Cardiac septum (tissue), 1 donor: ENCODE measurements at regions of chr1 and their contacts with region 1.

Region 1: DNA sequence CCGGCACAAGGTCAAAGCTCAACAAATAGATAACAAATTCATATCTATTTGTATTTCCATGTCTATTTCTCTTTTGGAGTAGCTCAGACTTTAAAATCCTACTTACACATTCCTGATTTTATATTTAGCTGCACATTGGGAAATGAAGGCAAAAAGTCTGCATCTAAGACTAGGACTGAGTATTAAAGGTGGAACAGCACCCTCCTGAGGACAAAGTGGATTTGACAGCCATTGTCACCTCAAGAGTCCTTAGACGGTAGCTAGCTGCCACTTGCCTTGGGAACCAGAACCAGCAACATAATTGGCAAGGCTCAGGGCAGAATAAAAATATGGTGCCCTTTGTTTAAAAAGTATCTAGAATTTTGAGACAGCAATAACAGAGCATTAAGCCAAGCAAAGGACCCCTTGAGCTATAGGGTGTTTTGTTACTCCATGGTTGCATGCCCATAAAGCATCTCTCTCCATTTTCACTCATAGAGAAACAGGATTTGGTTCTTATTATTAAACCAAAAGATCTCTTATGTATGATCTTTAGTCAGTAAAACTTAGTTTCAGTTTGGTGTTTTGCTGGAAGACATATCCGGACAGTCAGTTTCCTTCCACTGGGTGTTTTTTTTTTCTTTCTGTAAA is 30.0 kb upstream of the SGIP1 start:
- DNase-seq: no peak

Region 2: DNA sequence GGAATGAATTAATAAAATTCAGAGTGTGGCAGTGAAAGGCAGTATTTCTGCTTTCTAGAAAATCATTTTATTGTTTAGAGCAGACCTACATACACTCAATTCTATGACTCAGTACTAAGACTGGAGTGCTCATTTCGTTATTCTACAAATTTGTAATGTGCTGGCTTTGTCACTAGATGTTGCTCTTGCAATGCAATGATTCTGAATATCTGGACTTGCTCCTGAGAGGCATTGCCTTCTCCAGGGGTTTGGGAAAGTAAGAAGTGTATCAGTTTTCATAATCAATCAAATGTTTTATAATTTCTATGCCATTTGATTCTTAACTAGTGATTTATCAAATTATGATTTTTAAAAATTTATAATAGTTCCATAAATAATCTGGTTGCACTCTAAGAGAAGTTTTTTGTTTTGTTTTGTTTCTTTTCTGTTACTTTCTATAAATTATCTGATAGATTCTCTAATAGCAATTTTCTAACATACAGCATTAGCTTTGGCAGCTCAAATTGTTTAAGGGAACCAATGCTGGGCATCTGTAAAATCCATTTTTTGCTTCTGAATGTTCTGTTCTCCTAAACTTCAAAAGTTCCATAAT is 250.5 kb before region 1 on chr1:
- intact Hi-C with region 1: loop called (anchors 5 kb)
- DNase-seq: no peak

Region 3: DNA sequence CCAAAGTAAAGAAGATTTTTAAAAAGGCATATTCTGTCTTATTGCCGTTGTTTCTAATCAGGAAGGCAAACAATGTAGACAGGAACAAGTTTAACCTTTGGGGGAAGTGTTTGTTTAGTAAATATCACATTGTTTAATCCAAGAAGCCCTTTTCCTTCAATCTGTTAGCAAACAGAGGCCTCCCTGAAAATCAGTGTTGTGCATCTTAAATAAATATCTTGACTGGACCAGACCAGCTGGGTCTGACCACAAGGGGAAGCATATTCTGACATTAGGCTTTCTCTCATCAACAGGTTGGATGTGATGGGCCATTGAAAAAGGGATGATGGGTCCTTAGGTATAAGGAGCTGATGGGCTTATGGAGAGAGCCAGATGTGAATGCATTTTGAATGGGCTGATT is 51.8 kb before region 1 on chr1:
- intact Hi-C with region 1: loop called (anchors 5 kb)
- DNase-seq: no peak